Mammary epithelial cell (primary cell): ENCODE measurements at regions of chr1 and their contacts with region 1.

Region 1: GRCh38 chr1:206982216-206982615 is 12.0 kb upstream of the FCAMR start:
- DNase-seq: peak; percentile 33
- H3K4me3 ChIP-seq: no peak overlapping the region
- H3K27ac ChIP-seq: no peak overlapping the region
- H3K4me1 ChIP-seq: no peaks in the 10 kb centered on the region
- H3K27me3 ChIP-seq: no peaks in the 10 kb centered on the region
- CTCF ChIP-seq: peak; percentile 82 to 83

Region 2: GRCh38 chr1:206590025-206590758 is 392.0 kb before region 1 on chr1:
- CTCF ChIA-PET with region 1: no interaction called
- dilution Hi-C with region 1: no loop called
- in situ Hi-C with region 1: no loop called
- intact Hi-C with region 1: loop called (anchors 5 kb)
- DNase-seq: peak; percentile 96
- H3K4me3 ChIP-seq: no peak overlapping the region
- H3K27ac ChIP-seq: peak overlapping the region; percentile 26
- H3K4me1 ChIP-seq: peaks cover 48% of the 10 kb centered on the region
- H3K27me3 ChIP-seq: no peaks in the 10 kb centered on the region
- CTCF ChIP-seq: peak; percentile 35 to 36

Region 3: DNA sequence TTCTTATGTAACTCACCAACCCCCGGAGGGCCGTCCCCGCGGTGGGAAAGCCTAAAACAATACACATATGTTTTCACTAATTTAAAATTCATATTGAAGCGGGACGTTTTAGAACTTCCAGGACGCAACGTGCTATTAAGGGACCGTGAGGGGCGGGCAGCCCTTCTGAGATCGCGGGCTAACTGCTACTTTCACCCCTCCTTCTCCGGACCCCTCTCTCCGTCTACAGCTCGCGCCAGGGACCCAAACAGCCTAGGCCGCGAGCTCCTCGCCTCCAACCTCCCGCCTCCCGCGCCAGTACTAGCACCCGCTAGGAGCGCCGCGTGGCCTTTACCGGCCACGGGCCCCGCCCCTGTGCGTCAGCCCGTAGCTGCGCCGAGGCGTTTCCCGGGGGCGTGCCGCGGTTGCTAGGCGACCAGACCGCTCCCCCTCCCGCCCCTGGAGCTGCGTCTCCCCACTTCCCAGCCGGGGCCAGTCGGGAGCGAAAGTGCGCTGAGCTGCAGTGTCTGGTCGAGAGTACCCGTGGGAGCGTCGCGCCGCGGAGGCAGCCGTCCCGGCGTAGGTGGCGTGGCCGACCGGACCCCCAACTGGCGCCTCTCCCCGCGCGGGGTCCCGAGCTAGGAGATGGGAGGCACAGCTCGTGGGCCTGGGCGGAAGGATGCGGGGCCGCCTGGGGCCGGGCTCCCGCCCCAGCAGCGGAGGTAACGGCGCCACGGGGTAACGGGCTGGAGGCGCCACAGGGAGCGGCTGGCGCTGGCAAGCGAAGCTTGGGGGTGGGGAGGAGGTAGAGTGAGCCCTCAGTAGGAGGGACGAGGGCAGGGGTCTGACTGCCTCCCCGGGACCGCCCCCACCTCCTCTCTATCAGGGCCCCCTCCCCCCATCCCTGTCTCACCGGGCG is 346.9 kb before region 1 on chr1 and contains the start of gene DYRK3:
- CTCF ChIA-PET with region 1: no interaction called
- dilution Hi-C with region 1: no loop called
- in situ Hi-C with region 1: no loop called
- intact Hi-C with region 1: loop called (anchors 1 kb)
- DNase-seq: peak; percentile 94
- H3K4me3 ChIP-seq: peak within 1 kb of the TSS; percentile 86 to 95 (median 88)
- H3K27ac ChIP-seq: peak within 1 kb of the TSS; percentile 98
- H3K4me1 ChIP-seq: peaks cover 30% of the 10 kb centered on the region
- H3K27me3 ChIP-seq: no peaks in the 10 kb centered on the region
- CTCF ChIP-seq: peak in 1 of 2 donors; percentile 26
- total RNA-seq, gene DYRK3: 23.2 to 35.3 TPM

Region 4: DNA sequence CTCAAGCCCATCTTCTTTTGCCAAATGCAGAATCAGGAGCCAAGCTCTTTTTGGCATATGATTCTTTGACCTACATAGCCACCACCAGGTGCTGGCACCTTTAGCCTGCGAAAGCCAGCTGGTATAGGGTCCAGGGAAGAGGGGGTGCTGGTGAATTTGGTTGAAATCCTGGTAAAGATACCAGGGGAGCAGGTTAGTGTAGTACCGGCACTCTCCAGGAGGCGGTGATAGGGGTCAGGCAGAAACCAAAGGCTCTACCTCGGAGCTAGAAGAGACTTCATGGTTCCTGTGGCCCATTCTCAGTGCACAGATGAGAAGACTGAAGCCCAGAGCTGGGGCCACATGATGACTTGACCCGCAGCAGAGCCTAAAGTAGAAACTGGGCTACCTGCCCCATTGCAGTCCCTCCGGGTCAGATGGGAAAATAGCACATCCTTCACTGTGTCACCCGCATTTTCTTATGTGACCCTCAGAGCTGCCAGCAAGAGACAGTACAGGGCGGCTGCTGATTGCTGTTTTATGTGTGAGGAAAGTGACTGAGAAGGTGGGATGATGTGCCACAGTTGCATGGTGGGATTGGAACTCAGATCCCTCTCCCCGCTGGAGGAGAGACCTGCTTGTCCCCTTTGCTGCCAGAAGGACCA is 247.6 kb before region 1 on chr1:
- CTCF ChIA-PET with region 1: no interaction called
- dilution Hi-C with region 1: no loop called
- in situ Hi-C with region 1: no loop called
- intact Hi-C with region 1: loop called (anchors 1 kb)
- DNase-seq: no peak
- H3K4me3 ChIP-seq: no peak overlapping the region
- H3K27ac ChIP-seq: no peak overlapping the region
- H3K4me1 ChIP-seq: peaks cover 4% of the 10 kb centered on the region
- H3K27me3 ChIP-seq: no peaks in the 10 kb centered on the region
- CTCF ChIP-seq: peak; percentile 79 to 87

Region 5: GRCh38 chr1:206865013-206865671 is 117.1 kb before region 1 on chr1 and contains the start of gene IL20:
- CTCF ChIA-PET with region 1: no interaction called
- dilution Hi-C with region 1: no loop called
- in situ Hi-C with region 1: no loop called
- intact Hi-C with region 1: loop called (anchors 5 kb)
- DNase-seq: peak; percentile 78
- H3K4me3 ChIP-seq: no peak within 1 kb of the TSS
- H3K27ac ChIP-seq: no peak within 1 kb of the TSS
- H3K4me1 ChIP-seq: peaks cover 34% of the 10 kb centered on the region
- H3K27me3 ChIP-seq: no peaks in the 10 kb centered on the region
- CTCF ChIP-seq: peak; percentile 98 to 99
- total RNA-seq, gene IL20: not detected

Region 6: GRCh38 chr1:207004981-207005830 is 23.0 kb after region 1 on chr1:
- CTCF ChIA-PET with region 1: no interaction called
- dilution Hi-C with region 1: no loop called
- in situ Hi-C with region 1: no loop called
- intact Hi-C with region 1: loop called (anchors 2 kb)
- DNase-seq: peak; percentile 73
- H3K4me3 ChIP-seq: no peak overlapping the region
- H3K27ac ChIP-seq: peak overlapping the region; percentile 100
- H3K4me1 ChIP-seq: peaks cover 73% of the 10 kb centered on the region
- H3K27me3 ChIP-seq: no peaks in the 10 kb centered on the region
- CTCF ChIP-seq: peak; percentile 90 to 94